Gastrocnemius medialis (tissue), 4 donors: ENCODE measurements at regions of chr9 and their contacts with region 1.

Region 1: GRCh38 chr9:119195521-119195920 is 173.7 kb downstream of the BRINP1 start:
- DNase-seq: no peak
- ATAC-seq: no peak
- H3K4me3 ChIP-seq: no peak overlapping the region
- H3K27ac ChIP-seq: no peak overlapping the region
- H3K4me1 ChIP-seq: peaks cover 6 to 7% of the 10 kb centered on the region in 2 donors
- H3K27me3 ChIP-seq: no peaks in the 10 kb centered on the region
- CTCF ChIP-seq: no peak
- POLR2A ChIP-seq: no peak

Region 2: DNA sequence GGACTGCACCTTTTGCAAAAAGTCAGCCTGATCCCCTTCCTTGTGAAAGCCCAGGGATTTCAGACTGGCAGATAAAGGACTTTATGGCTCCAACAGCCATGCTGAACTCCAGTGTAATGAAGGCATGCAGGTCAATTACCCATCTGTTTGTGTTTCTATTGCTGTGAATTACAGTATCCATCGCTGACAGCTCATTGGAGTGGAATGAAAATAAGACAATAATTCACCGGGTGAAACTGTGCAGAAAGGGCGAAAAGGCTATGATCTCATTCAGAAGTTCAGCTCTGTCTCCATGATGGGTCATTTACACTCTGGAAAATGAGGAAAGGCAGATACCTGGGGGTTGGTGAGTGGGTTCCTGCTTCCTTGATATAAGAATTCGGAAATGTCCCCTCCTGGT is 25.8 kb after region 1 on chr9:
- in situ Hi-C with region 1: no loop called
- intact Hi-C with region 1: loop called (anchors 1 kb)
- DNase-seq: no peak
- ATAC-seq: no peak
- H3K4me3 ChIP-seq: no peak overlapping the region
- H3K27ac ChIP-seq: no peak overlapping the region
- H3K4me1 ChIP-seq: peaks cover 0 to 5% of the 10 kb centered on the region in 2 donors
- H3K27me3 ChIP-seq: no peaks in the 10 kb centered on the region
- CTCF ChIP-seq: no peak
- POLR2A ChIP-seq: no peak